ENCODE measurements at regions of chr7 and their contacts with region 1.

Region 1: DNA sequence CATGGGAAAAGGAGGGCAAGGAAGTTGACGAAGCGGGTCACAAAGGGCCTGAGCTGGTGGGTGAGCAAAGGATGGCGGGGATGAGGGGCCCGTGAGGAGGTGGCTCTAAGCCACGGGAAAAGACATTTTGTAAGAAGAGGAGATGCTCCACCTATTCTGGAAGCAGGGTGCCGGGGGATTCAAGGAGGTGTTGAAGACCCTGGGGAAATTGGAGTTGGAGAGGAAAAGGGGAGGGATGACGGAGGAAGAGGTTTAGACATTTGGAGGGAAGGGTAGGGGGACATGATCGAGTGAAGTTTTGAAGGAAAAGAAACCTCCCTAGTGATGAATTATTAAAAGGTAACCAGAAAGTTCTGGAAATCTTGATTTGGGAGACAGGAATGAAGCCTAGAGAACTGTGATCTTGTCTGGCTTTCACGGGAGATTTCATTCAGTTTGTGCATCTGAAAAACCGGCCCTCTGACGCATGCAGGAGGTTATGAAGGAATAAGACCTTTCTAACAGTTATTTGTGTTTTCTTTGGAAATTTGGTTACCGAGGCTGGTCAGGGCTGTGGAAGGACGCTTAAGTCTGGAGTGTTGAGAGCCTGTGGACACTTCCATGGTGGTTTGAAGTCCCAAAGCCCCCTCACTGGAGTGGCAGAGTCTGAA is 1.4 kb downstream of the SMO start:
- DNase-seq: no peak
- ATAC-seq: no peak
- H3K4me3 ChIP-seq: no peak overlapping the region
- H3K27ac ChIP-seq: no peak overlapping the region
- H3K4me1 ChIP-seq: peaks cover 0 to 13% of the 10 kb centered on the region in 2 experiments; a peak in 2 of 5 replicates
- H3K27me3 ChIP-seq: peaks cover 65 to 68% of the 10 kb centered on the region in 2 experiments
- CTCF ChIP-seq: no peak
- EP300 ChIP-seq: no peak
- POLR2A ChIP-seq: no peak
- RAD21 ChIP-seq: no peak

Region 2: GRCh38 chr7:128986609-128987008 is 203.2 kb before region 1 on chr7:
- CTCF ChIA-PET with region 1: no interaction called
- POLR2A ChIA-PET with region 1: no interaction called
- in situ Hi-C with region 1: no loop called
- intact Hi-C with region 1: no loop called
- DNase-seq: no peak
- ATAC-seq: no peak
- H3K4me3 ChIP-seq: no peak overlapping the region
- H3K27ac ChIP-seq: no peak overlapping the region
- H3K4me1 ChIP-seq: no peaks in the 10 kb centered on the region
- H3K27me3 ChIP-seq: no peaks in the 10 kb centered on the region
- CTCF ChIP-seq: no peak
- EP300 ChIP-seq: no peak
- POLR2A ChIP-seq: no peak
- RAD21 ChIP-seq: no peak

Region 3: GRCh38 chr7:129110258-129110981 is 79.4 kb before region 1 on chr7:
- CTCF ChIA-PET with region 1: no interaction called
- POLR2A ChIA-PET with region 1: no interaction called
- in situ Hi-C with region 1: no loop called
- intact Hi-C with region 1: loop called (anchors 5 kb)
- DNase-seq: peak; percentile 41 to 70 (median 57)
- ATAC-seq: peak; percentile 83
- H3K4me3 ChIP-seq: no peak overlapping the region
- H3K27ac ChIP-seq: peak overlapping the region; percentile 46; the same call in 2 of the 3 replicates
- H3K4me1 ChIP-seq: peaks cover 0 to 11% of the 10 kb centered on the region in 2 experiments; a peak in 4 of 5 replicates
- H3K27me3 ChIP-seq: no peaks in the 10 kb centered on the region
- CTCF ChIP-seq: no peak
- EP300 ChIP-seq: no peak
- POLR2A ChIP-seq: no peak
- RAD21 ChIP-seq: no peak

Region 4: DNA sequence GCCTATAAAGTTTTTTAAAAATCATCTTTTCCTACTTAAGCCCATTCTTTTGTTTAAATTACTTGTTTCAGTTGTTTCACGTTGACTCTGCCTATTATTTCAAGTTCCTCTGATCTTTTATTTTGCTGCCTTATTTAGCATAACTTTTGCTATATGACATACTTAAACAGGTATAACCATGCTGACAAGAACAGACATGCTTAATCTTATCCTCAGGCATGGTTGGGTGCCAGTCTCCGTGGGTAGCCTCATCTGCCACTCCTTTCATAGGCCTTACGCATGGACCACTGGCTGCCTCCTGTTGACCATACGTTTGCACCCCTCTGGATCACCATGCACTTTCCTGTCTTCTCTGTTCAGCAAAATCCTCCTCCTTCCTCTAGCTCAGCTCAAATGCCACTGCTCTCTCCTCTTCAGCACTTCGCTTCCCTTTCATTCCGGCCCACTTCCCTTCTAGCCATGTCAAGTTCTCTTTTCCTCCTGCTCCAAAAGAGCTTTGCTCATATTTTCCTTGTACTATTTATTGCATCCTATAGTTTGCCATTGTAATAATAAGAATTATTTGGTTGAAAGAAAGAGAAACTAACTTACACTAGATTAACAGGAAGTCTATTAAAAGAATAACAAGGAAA is 55.3 kb before region 1 on chr7:
- CTCF ChIA-PET with region 1: no interaction called
- POLR2A ChIA-PET with region 1: no interaction called
- in situ Hi-C with region 1: no loop called
- intact Hi-C with region 1: no loop called
- DNase-seq: no peak
- ATAC-seq: no peak
- H3K4me3 ChIP-seq: no peak overlapping the region
- H3K27ac ChIP-seq: no peak overlapping the region
- H3K4me1 ChIP-seq: no peaks in the 10 kb centered on the region
- H3K27me3 ChIP-seq: peaks cover 15 to 33% of the 10 kb centered on the region in 2 experiments
- CTCF ChIP-seq: no peak
- EP300 ChIP-seq: no peak
- POLR2A ChIP-seq: no peak
- RAD21 ChIP-seq: no peak

Region 5: GRCh38 chr7:130141161-130141883 is 951.5 kb after region 1 on chr7:
- CTCF ChIA-PET with region 1: no interaction called
- POLR2A ChIA-PET with region 1: no interaction called
- in situ Hi-C with region 1: no loop called
- intact Hi-C with region 1: no loop called
- DNase-seq: peak; percentile 81 to 87 (median 85)
- ATAC-seq: peak; percentile 80
- H3K4me3 ChIP-seq: 0 out of 2 replicates have a peak overlapping the region, but pooled peaks have one; percentile 3
- H3K27ac ChIP-seq: peak overlapping the region; percentile 66
- H3K4me1 ChIP-seq: peaks cover 43 to 47% of the 10 kb centered on the region in 2 experiments
- H3K27me3 ChIP-seq: no peaks in the 10 kb centered on the region
- CTCF ChIP-seq: no peak
- EP300 ChIP-seq: no peak; the same call in 1 of the 2 replicates
- POLR2A ChIP-seq: 0 out of 2 replicates have a peak, but pooled peaks have one; percentile 51
- RAD21 ChIP-seq: no peak

Measured in K562 (cell line).